CD4-positive, alpha-beta T cell (primary cell): ENCODE measurements at regions of chr15 and their contacts with region 1.

Region 1: DNA sequence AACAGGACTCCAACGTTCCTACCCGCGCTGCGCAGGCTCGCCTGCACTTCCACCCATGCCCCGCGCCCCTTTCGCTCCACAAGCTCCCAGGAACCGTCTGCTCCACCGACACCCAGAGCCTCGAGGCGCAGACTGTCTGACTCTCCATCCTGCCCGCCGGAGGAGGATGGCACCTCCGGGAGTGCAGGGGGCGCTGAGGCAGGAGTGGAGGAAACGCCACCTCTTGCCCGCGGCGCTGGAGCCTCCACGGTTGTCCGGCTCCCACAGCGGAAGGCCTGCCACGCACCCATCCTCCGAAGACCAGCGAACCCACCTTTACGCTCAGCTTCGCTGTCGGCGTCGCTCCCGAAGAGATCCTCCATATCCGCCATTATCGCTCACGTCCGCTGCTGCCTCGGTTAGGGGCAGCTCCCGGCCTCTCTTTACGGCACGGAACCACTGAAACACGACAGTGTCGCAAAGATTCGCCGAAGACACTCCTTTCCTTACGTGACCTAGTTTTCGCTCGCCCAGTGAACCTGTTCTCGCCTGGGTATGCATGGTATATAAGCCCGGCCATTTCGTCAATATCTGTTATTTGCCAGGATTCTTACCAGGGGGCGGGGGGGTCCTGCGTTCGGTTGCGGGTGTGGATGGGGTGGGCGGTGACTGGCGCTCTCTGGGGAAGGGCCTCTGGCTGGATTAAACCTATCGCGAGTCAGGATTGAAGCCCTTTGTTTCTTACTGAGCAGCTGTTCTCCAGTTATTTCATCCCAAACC is at the start of gene LEO1:
- DNase-seq: peak; percentile 73 to 97 (median 83)
- ATAC-seq: peak; percentile 92
- H3K4me3 ChIP-seq: peak within 1 kb of the TSS; percentile 98
- H3K4me3 Mint-ChIP-seq: peak within 1 kb of the TSS; percentile 95
- H3K27ac ChIP-seq: peak within 1 kb of the TSS; percentile 79 to 85
- H3K27ac Mint-ChIP-seq: peak within 1 kb of the TSS; percentile 92
- H3K4me1 ChIP-seq: peaks cover 19% of the 10 kb centered on the region
- H3K4me1 Mint-ChIP-seq: peaks cover 28% of the 10 kb centered on the region
- H3K27me3 ChIP-seq: no peaks in the 10 kb centered on the region
- H3K27me3 Mint-ChIP-seq: no peaks in the 10 kb centered on the region
- CTCF ChIP-seq: peak; percentile 47
- total RNA-seq, gene LEO1: 6.2 to 6.7 TPM

Region 2: DNA sequence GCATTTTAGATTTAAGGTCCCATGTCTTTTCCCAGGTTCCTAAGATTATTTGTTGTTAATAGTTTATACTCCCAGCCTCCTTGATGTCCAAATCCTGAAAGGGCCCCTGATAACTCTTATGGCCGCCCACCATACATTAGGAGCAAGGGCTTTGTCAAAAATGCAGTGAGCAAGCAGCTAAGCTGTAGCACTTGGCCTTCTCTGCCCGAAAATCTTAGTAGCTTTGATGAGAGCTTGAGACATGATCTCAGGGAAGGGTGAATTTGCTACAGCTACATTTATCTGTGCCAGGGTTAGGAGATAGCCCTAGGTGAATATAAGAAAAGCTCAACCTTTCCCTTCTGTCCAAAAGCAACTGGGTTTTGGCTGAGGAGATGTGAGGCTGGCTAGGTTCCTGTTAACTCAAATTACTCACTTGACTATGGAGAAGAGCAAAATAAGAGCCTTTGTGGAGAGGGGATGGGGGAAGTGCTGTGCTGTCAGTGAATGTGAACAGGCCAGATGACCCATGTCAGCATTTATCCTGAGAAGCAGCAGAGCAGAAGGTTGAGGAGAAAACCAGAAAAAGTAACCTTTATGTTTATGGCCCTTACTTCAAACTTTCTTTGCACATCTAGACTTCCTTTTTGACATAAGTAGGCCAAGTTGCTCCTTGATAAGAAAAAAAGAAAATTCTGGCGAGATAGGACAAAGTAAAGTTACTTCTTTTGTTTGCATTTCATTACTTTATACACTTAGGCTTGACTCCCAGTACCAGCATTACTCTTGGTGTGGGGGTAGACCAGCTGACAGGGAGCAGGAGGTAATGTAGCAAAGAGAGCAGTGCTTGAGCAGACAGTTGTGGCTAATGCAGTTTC is 68.6 kb after region 1 on chr15:
- CTCF ChIA-PET with region 1: interaction called, 5 read pairs
- POLR2A ChIA-PET with region 1: interaction called, 23 read pairs
- intact Hi-C with region 1: no loop called
- DNase-seq: no peak
- ATAC-seq: no peak
- H3K4me3 ChIP-seq: no peak overlapping the region
- H3K4me3 Mint-ChIP-seq: peak overlapping the region; percentile 16
- H3K27ac ChIP-seq: peak overlapping the region in 1 of 2 donors; percentile 19
- H3K27ac Mint-ChIP-seq: peak overlapping the region; percentile 40
- H3K4me1 ChIP-seq: peaks cover 10% of the 10 kb centered on the region
- H3K4me1 Mint-ChIP-seq: peaks cover 69% of the 10 kb centered on the region
- H3K27me3 ChIP-seq: no peaks in the 10 kb centered on the region
- H3K27me3 Mint-ChIP-seq: no peaks in the 10 kb centered on the region
- CTCF ChIP-seq: no peak

Region 3: DNA sequence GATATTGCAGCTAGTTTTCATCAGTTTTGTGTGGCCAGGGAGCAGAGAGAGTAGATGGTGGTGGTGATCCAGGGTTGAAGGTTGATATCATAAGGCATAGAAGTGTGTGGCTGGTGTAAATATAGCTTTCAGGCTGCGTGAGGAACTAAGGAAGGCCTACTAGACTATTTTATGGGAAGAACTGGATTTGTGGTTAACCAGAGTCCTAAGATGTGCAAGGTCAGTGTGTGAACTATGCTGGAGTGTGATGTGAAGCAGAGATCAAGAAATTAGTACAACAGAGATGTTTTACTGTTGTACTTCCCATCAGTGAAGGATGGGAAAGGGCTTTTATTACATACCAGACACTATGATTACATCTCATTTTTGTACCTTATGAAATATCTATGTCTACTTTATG is 88.9 kb after region 1 on chr15:
- CTCF ChIA-PET with region 1: no interaction called
- POLR2A ChIA-PET with region 1: no interaction called
- intact Hi-C with region 1: no loop called
- DNase-seq: no peak
- ATAC-seq: no peak
- H3K4me3 ChIP-seq: no peak overlapping the region
- H3K4me3 Mint-ChIP-seq: no peak overlapping the region
- H3K27ac ChIP-seq: no peak overlapping the region
- H3K27ac Mint-ChIP-seq: no peak overlapping the region
- H3K4me1 ChIP-seq: no peaks in the 10 kb centered on the region
- H3K4me1 Mint-ChIP-seq: no peaks in the 10 kb centered on the region
- H3K27me3 ChIP-seq: no peaks in the 10 kb centered on the region
- H3K27me3 Mint-ChIP-seq: no peaks in the 10 kb centered on the region
- CTCF ChIP-seq: no peak